Right ventricle myocardium inferior (tissue), 1 donor: ENCODE measurements at regions of chr12 and their contacts with region 1.

Region 1: DNA sequence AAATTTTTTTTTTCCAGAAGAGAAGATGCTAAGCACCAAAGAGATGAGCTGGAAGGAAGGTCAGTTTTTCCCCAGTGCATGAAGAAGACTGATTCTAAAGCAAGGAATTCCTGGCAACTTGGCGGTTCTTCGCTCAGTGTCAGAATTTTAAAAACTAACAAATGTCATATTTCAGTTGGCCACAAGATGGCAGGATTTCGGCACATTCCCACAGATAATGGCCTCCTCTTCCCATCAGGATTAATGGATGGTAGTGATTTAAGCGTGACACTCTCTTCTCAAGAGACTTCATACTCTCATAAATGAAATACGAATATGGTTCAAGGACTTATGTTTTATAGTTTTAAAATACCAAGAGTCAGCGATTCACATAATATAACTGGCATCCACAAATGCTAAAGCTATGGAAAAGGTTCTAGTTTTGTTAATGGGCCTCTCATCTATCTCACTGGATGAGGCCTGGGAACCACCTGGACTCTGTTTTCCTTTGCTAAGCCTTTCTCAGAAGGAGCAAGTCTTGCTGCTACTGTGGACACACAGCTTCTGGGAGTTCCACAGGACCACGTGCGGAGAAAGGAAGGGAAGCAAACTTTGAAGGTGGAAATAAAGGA is 46.1 kb upstream of the PTPRO start:
- DNase-seq: no peak
- ATAC-seq: no peak

Region 2: DNA sequence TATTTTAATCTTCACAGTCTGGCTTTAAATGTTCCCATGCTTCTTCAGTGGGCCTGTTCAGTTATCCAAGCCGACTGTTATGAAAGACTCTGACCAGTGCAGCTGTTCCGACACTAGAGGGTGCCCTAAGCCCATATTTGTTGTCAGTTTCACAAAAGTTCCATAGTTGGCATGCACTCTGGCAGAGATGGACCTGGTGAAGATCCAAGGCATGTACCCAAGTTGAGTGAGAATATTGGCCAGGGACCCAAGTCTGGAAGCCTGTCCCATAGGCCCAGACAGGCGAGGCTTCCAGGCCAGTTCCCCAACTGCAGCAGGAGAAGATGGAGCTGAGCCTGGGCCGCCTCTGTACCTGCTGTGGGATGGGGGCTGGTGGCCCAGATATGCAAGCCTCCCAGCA is 552.4 kb before region 1 on chr12:
- intact Hi-C with region 1: loop called (anchors 5 kb)
- DNase-seq: peak; percentile 66
- ATAC-seq: peak; percentile 84

Region 3: DNA sequence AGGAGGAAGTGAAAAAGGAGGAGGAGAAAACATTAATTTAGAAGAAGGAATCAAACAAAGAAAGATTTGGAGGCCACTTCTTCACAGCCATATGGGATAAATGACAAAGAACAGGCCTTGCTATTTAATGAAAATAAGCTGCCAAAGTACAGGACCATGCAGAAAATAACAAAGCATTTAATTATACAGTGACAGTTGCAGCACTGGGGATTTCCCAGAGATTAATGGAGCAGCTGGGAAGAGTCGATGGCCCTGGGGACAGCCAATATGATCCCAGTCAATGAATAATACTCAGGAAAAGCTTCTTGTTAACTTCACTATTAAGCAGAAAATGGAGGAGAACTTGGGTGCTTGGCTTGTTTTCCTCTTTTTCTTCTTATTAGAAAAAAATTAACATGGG is 89.6 kb before region 1 on chr12:
- intact Hi-C with region 1: no loop called
- DNase-seq: no peak
- ATAC-seq: peak; percentile 63

Region 4: DNA sequence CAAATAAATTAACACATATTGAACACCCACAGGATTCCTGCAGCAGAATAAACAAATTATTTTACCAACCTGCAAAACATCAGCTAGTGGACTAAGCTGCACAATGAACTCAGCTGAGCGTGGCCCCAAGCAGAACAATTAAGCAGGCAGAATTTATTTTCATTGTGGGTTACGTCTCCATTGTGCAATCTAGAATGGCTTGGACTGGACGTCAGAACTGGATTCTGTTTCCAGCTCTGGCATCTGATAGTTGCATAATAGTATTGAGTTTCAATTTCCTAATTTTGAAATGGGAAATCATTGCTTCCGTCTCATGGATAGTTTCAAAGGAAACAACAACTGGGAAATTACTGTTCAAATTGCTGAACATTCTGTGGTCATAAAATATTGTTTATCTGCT is 19.4 kb before region 1 on chr12:
- intact Hi-C with region 1: no loop called
- DNase-seq: no peak
- ATAC-seq: peak; percentile 84

Region 5: DNA sequence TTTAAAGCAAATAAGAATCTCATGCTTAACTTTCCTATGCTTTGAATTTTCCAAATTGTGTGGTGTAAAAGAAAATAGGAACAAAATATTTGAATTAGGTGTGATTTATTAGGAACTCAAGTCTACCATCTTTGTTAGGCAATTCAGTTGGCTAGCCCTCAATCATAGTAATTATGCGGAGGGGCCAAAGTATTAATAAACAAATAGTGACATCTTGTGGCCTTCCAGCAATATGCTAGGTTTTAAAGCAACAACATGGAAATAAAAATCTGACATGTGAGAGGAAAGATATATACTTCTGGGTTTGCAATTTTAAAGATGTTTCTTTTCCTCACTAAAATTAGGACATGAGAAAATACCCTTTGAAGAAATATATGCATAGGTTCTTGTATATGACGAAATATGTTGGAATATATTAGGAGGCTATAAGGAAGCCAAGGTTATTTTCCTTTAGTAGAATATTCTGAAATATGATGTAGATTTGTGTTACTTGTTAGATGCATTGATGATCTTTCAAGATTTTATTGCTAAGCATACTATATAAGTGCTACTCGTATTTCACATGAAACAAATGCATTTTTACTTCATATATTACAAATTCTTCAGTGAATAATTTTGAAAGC is 246.5 kb after region 1 on chr12:
- intact Hi-C with region 1: loop called (anchors 5 kb)
- DNase-seq: no peak
- ATAC-seq: no peak

Region 6: GRCh38 chr12:15584366-15585041 is 308.3 kb after region 1 on chr12:
- intact Hi-C with region 1: loop called (anchors 2 kb)
- DNase-seq: no peak
- ATAC-seq: no peak

Region 7: GRCh38 chr12:15856097-15856982 is 580.1 kb after region 1 on chr12:
- intact Hi-C with region 1: loop called (anchors 5 kb)
- DNase-seq: no peak
- ATAC-seq: no peak